HCT116 (cell line): ENCODE measurements at regions of chr2 and their contacts with region 1.

Region 1: DNA sequence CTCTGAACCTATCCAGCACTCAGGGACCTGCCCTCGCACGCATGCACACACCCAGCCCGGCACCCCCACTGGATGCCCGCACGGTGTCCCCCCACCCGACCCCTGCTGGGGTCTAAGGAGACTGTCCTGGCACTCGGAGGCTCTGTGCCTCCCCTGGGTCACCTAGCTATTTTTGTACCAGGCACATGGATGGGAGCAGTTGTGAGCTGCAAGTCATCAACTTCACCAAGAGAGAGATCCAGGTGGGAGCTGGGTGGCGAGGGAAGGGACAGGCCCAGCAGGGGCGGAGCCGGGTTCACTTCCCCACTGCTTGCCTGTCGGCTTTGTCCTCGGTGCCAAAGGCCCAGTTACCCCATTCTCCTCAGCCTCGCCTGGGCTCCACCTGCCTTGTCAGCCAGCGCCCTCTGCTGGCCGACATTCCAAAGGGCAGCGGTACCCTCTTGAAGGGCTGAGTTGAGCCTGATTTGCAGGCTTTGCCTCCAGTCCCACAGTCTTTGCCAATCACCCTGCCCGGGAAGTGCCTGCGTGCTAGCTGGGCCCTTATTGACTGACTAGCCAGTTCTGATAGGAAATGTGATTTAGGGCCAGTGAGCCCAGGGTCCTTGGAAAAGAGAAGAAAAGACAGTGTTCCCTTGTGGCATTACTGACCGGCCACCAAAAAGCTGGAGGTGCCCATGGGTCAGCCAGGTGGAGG is 5.8 kb downstream of the NT5DC4 start:
- DNase-seq: peak; percentile 89
- ATAC-seq: peak; percentile 89
- H3K4me3 ChIP-seq: peak overlapping the region in 1 of 2 experiments; percentile 23; a peak in 1 of 4 replicates
- H3K27ac ChIP-seq: peak overlapping the region; percentile 40; the same call in 1 of the 2 replicates
- H3K4me1 ChIP-seq: peaks cover 13 to 29% of the 10 kb centered on the region in 2 experiments
- H3K27me3 ChIP-seq: no peaks in the 10 kb centered on the region
- CTCF ChIP-seq: peak; percentile 95 to 98 (median 96)
- POLR2A ChIP-seq: no peak
- RAD21 ChIP-seq: peak; percentile 100

Region 2: GRCh38 chr2:112129060-112129459 is 597.6 kb before region 1 on chr2:
- CTCF ChIA-PET with region 1: no interaction called
- POLR2A ChIA-PET with region 1: no interaction called
- RAD21 ChIA-PET with region 1: no interaction called
- intact Hi-C with region 1: no loop called
- DNase-seq: no peak
- ATAC-seq: no peak
- H3K4me3 ChIP-seq: no peak overlapping the region
- H3K27ac ChIP-seq: no peak overlapping the region
- H3K4me1 ChIP-seq: no peaks in the 10 kb centered on the region
- H3K27me3 ChIP-seq: no peaks in the 10 kb centered on the region
- CTCF ChIP-seq: no peak
- POLR2A ChIP-seq: no peak
- RAD21 ChIP-seq: no peak

Region 3: DNA sequence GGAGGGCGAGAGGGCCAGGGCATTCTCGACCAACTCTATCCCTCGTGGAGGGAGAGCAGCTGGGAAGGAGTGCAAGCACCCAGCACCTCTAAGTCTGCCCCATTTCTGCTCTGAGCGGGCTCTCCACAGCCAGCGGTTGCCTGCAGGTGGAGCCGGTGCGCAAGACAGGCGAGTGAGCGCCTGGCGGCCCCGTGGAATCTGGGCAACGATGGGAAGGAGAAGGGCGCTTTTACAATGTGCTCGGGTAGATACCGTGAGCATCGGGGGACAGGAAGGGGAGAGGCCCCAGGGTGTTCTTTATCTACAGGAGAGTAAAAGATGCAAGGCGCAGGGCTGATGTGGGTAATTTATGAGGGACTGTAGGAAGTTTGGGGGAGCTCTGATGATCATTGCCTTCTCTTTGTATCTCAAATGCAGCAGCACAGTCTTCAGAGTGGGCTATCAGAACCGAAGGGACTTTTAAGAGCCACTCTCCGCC is 245.6 kb before region 1 on chr2:
- CTCF ChIA-PET with region 1: interaction called, 3 read pairs
- POLR2A ChIA-PET with region 1: no interaction called
- RAD21 ChIA-PET with region 1: no interaction called
- intact Hi-C with region 1: loop called (anchors 5 kb)
- DNase-seq: peak; percentile 67
- ATAC-seq: peak; percentile 81
- H3K4me3 ChIP-seq: peak overlapping the region; percentile 62
- H3K27ac ChIP-seq: peak overlapping the region; percentile 87
- H3K4me1 ChIP-seq: peaks cover 15 to 24% of the 10 kb centered on the region in 2 experiments; a peak in 3 of 4 replicates
- H3K27me3 ChIP-seq: no peaks in the 10 kb centered on the region
- CTCF ChIP-seq: peak; percentile 72 to 87 (median 79)
- POLR2A ChIP-seq: peak; percentile 6
- RAD21 ChIP-seq: peak; percentile 84

Region 4: DNA sequence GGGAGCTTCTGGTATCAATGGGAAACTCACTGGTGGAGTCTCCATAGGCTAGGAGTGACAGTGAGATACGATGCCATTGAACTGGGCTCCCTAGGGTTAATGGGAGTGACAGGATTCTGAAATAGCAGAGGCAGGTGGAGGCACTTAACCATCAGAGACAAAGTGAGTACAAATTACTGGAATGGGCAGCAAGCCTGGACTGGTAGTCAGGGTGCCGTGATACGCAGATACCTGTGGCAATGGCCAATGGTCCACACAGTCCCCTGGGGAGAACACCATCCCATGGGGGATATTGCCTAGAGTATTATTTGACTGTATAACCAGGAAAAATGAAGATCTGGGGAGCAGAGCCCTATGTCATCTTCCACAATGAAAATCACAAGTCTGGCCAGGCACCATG is 124.9 kb before region 1 on chr2:
- CTCF ChIA-PET with region 1: interaction called, 71 read pairs
- POLR2A ChIA-PET with region 1: interaction called, 8 read pairs
- RAD21 ChIA-PET with region 1: interaction called, 4 to 17 read pairs
- intact Hi-C with region 1: loop called (anchors 1 kb)
- DNase-seq: no peak
- ATAC-seq: no peak
- H3K4me3 ChIP-seq: no peak overlapping the region
- H3K27ac ChIP-seq: no peak overlapping the region
- H3K4me1 ChIP-seq: peaks cover 3 to 12% of the 10 kb centered on the region in 2 experiments; a peak in 3 of 4 replicates
- H3K27me3 ChIP-seq: no peaks in the 10 kb centered on the region
- CTCF ChIP-seq: no peak
- POLR2A ChIP-seq: no peak
- RAD21 ChIP-seq: no peak

Region 5: DNA sequence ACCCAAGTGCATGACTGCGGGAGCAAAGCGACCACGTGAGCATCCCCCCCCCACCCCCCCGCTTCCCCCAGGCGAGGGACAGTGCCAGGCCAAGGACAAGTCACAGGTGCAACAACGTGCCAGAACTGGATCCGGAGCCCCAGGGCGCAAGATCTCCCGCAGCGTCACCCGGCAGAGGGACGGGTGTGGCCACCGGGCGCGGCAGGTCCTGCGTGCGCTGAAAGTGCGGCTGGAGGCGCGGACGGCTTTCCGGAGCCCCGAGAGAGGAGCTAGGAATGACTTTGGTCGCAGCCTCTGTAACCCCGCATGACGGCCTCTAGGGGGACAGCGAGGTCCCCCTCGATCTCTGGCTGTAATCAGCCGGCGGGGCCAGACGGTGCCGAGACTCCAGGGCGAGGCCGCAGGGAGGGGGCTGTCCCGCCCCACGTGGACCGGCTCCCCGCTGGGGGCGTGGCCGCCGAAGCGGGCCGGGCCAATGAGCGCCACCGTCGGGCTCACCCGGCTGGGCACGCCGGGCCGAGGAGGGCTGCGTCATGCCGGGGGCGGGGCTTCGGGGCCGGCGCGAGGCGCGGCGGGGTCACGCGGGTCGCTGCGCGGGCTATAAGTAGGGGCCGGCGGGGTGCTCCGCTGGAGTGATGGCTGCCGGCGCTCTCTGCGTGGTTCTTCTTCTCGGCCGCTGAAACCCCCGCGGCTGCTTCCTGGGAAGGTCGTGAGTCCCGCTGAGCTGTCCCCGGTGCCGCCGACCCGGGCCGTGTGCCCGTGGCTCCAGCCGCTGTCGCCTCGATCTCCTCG is 81.1 kb before region 1 on chr2 and contains the start of gene SLC20A1:
- CTCF ChIA-PET with region 1: interaction called, 6 read pairs
- POLR2A ChIA-PET with region 1: interaction called, 16 read pairs
- RAD21 ChIA-PET with region 1: interaction called in 1 of 2 experiments, 3 read pairs
- intact Hi-C with region 1: no loop called
- DNase-seq: peak; percentile 86
- ATAC-seq: peak; percentile 85
- H3K4me3 ChIP-seq: peak within 1 kb of the TSS; percentile 84 to 88
- H3K27ac ChIP-seq: peak within 1 kb of the TSS; percentile 85
- H3K4me1 ChIP-seq: peaks cover 48 to 61% of the 10 kb centered on the region in 2 experiments
- H3K27me3 ChIP-seq: no peaks in the 10 kb centered on the region
- CTCF ChIP-seq: peak in 1 of 3 experiments; percentile 34; a peak in 2 of 6 replicates
- POLR2A ChIP-seq: peak; percentile 94
- RAD21 ChIP-seq: no peak
- total RNA-seq, gene SLC20A1: 154 TPM

Region 6: DNA sequence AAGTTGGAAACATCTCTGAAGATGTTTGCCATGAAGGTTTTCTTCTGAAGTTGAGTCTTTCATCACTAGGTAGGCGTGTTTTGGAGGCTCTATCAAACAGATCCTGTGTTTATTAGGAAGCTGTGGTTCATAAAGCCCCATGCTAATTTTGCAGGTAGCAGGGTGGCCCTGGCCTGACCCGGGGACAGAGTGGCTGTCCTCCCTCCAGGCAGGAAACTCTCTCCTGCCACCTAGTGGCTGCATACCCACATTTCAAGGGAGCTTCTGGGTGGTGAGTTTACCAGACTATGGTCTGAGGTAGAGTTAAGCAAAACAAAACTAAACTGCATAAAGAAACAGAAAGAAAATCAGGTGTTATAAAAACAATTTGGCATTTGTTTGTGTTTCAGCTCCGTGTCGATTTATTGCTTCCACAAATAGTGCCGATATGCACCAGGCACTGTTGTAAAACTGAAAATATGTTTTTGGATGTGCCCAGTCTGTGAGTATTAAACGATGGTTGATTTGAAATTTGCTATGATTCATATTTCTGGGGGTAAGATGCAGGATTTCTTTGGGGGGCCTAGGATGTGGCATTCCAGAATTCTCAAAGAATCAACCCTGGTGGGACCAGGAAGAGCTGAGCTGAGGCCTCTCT is 158.3 kb after region 1 on chr2:
- CTCF ChIA-PET with region 1: interaction called, 20 read pairs
- POLR2A ChIA-PET with region 1: no interaction called
- RAD21 ChIA-PET with region 1: interaction called in 1 of 2 experiments, 3 read pairs
- intact Hi-C with region 1: no loop called
- DNase-seq: peak; percentile 40
- ATAC-seq: peak; percentile 91
- H3K4me3 ChIP-seq: no peak overlapping the region
- H3K27ac ChIP-seq: no peak overlapping the region
- H3K4me1 ChIP-seq: peaks cover 3 to 18% of the 10 kb centered on the region in 2 experiments; a peak in 3 of 4 replicates
- H3K27me3 ChIP-seq: no peaks in the 10 kb centered on the region
- CTCF ChIP-seq: peak; percentile 79 to 96 (median 93)
- POLR2A ChIP-seq: no peak
- RAD21 ChIP-seq: peak; percentile 90

Region 7: GRCh38 chr2:113041871-113042508 is 315.3 kb after region 1 on chr2:
- CTCF ChIA-PET with region 1: no interaction called
- POLR2A ChIA-PET with region 1: no interaction called
- RAD21 ChIA-PET with region 1: no interaction called
- intact Hi-C with region 1: no loop called
- DNase-seq: peak; percentile 29
- ATAC-seq: peak; percentile 93
- H3K4me3 ChIP-seq: no peak overlapping the region
- H3K27ac ChIP-seq: no peak overlapping the region
- H3K4me1 ChIP-seq: no peaks in the 10 kb centered on the region
- H3K27me3 ChIP-seq: no peaks in the 10 kb centered on the region
- CTCF ChIP-seq: peak; percentile 38 to 62 (median 53); a peak in 5 of 6 replicates
- POLR2A ChIP-seq: no peak
- RAD21 ChIP-seq: peak; percentile 45